Activated T-helper 2 cell treated with anti-CD3 and anti-CD28 coated beads, Interferon-gamma antibody, Interleukin-2, Interleukin-4, amounts not matched to agents 10 μg/mL and 5 μg/mL and 100 μg/mL, durations not matched to agents 14 hours and 24 hours and 36 hours (primary cell): ENCODE measurements at regions of chrX and their contacts with region 1.

Region 1: GRCh38 chrX:149881081-149881711 is at the start of gene MAGEA8:
- DNase-seq: no peak
- H3K4me3 Mint-ChIP-seq: no peak within 1 kb of the TSS
- H3K27ac Mint-ChIP-seq: no peak within 1 kb of the TSS
- H3K4me1 Mint-ChIP-seq: peaks cover 10% of the 10 kb centered on the region
- H3K27me3 Mint-ChIP-seq: peaks cover 18% of the 10 kb centered on the region
- total RNA-seq, gene MAGEA8: not detected in 2 replicates

Region 2: DNA sequence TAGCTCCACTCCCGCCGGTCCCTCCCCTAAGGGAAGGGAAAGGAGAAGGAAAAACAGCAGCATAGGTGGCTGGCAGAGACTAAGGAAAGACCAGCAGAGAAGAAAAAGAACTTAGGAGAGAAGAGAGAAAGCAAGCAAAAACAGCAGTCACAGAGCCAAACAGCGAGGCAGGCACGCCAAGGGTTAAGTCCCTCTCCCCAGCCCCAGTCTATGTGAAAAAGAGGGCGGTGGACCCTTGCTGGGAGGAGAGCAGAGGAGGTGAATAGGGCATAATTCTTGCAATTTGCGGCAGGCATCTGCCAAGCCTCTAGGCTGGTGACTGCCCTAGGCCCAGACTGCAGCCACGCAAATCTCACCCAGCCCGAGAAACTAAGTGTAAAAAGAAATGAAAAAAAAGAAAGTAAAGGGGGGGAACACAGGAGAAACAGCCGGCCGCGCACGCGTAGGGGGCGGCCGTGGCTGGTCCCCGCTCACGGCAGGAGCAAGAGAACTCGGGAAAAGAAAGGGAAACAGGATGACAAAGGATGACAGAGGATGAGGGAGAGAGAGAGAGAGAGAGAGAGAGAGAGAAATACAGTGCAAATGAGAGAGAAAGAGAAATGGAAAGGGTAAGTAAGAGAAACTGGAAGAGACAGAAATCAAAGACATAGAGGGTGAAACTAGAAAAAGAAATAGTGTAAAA is 50.9 kb before region 1 on chrX:
- intact Hi-C with region 1: no loop called
- DNase-seq: peak; percentile 9
- H3K4me3 Mint-ChIP-seq: peak overlapping the region; percentile 66
- H3K27ac Mint-ChIP-seq: peak overlapping the region; percentile 86
- H3K4me1 Mint-ChIP-seq: peaks cover 28% of the 10 kb centered on the region
- H3K27me3 Mint-ChIP-seq: no peaks in the 10 kb centered on the region

Region 3: GRCh38 chrX:150200820-150201287 is 319.7 kb after region 1 on chrX:
- intact Hi-C with region 1: loop called (anchors 10 kb)
- DNase-seq: peak; percentile 28
- H3K4me3 Mint-ChIP-seq: no peak overlapping the region
- H3K27ac Mint-ChIP-seq: no peak overlapping the region
- H3K4me1 Mint-ChIP-seq: peaks cover 8% of the 10 kb centered on the region
- H3K27me3 Mint-ChIP-seq: no peaks in the 10 kb centered on the region

Region 4: DNA sequence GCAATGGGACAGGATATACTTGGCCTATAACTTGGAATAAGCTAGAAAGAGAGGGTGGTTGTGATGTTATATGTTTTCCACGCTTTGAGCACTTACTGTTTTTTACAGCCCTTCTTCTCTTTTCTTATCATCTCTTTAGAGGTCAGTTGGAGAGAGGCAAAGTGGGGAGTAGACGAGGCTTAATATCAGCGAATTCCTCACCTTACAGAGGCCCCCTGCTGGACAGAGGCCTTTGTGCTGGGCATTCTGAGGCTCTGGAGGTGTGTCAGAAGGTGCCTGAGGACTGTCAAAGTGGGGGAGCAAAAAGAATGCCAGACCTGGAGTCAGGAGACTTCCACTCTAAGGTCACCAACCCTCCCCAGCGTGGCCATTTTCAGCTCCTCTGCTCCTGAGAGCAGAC is 524.4 kb after region 1 on chrX:
- intact Hi-C with region 1: no loop called
- DNase-seq: no peak
- H3K4me3 Mint-ChIP-seq: no peak overlapping the region
- H3K27ac Mint-ChIP-seq: no peak overlapping the region
- H3K4me1 Mint-ChIP-seq: peaks cover 26% of the 10 kb centered on the region
- H3K27me3 Mint-ChIP-seq: peaks cover 2% of the 10 kb centered on the region